ENCODE measurements at regions of chr3 and their contacts with region 1.

Region 1: DNA sequence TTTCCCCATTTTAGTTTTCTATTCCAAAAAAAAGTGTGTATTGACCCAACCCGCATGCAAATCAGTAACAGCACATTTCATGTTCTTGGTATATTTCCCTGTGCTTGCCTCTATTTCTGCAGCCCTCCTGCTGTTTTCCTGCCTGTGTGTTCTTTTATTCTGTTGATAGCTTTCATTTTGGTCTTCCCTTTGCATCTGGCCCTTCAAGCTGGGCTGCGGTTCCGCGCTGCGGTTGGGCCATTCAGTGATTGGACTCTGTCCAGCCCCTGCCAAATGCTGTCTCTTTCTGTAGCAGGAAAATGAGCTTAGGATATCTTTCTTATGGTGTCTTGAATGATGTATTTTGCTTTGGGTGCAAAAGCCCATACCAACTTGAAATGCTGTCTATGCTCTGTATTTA is 49.9 kb downstream of the ZNF621 start:
- DNase-seq: no peak
- ATAC-seq: no peak
- H3K4me3 ChIP-seq: no peak overlapping the region
- H3K27ac ChIP-seq: no peak overlapping the region
- H3K4me1 ChIP-seq: no peaks in the 10 kb centered on the region
- H3K27me3 ChIP-seq: no peaks in the 10 kb centered on the region

Region 2: GRCh38 chr3:40337136-40338108 is 237.2 kb before region 1 on chr3:
- intact Hi-C with region 1: loop called in 1 of 2 experiments (anchors 10 kb)
- DNase-seq: no peak
- ATAC-seq: no peak
- H3K4me3 ChIP-seq: no peak overlapping the region
- H3K27ac ChIP-seq: no peak overlapping the region
- H3K4me1 ChIP-seq: no peaks in the 10 kb centered on the region
- H3K27me3 ChIP-seq: no peaks in the 10 kb centered on the region